ENCODE measurements at regions of chr5 and their contacts with region 1.

Region 1: DNA sequence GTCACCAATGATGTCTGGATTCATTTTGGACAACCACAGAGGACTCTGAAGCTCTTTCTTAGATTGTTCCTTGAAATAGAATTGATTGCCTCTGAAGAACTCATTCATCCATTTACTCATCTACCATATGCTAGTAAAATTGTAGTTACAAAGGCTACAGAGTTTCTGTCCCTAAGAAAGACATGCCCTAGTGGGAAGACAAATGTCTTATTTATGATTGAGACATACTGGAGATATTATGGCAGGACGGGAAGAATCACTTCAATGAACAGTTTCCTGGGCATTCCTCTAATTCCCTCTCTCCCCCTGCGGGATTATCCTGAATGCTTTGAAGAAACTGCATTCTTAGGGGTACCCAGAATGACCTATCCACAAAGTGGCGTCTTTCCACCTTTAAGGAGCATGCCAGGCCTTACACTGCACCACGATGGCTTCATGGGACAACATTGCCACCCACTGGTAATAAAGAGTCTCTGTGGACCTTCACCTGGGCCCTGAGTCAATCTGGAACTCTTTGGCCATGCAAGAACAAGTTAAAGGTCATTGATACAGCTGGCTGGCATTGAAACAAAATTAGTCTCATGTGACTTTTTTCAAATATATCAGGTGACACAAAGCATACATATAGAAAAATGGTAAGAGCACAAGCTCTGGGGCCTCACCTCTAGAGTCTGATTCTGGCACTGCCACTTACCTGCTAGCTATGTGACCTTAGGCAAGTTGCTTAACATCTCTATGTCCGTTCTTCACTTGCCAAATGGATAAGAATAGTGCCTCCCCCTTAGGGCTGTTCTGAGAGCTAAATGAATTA is 32.1 kb downstream of the ANKRD55 start:
- DNase-seq: peak in 1 of 2 donors; percentile 27
- ATAC-seq: peak; percentile 81 to 97 (median 94)
- H3K4me3 ChIP-seq: no peak overlapping the region
- H3K27ac ChIP-seq: no peak overlapping the region
- H3K4me1 ChIP-seq: no peaks in the 10 kb centered on the region
- H3K27me3 ChIP-seq: no peaks in the 10 kb centered on the region
- CTCF ChIP-seq: peak; percentile 67

Region 2: DNA sequence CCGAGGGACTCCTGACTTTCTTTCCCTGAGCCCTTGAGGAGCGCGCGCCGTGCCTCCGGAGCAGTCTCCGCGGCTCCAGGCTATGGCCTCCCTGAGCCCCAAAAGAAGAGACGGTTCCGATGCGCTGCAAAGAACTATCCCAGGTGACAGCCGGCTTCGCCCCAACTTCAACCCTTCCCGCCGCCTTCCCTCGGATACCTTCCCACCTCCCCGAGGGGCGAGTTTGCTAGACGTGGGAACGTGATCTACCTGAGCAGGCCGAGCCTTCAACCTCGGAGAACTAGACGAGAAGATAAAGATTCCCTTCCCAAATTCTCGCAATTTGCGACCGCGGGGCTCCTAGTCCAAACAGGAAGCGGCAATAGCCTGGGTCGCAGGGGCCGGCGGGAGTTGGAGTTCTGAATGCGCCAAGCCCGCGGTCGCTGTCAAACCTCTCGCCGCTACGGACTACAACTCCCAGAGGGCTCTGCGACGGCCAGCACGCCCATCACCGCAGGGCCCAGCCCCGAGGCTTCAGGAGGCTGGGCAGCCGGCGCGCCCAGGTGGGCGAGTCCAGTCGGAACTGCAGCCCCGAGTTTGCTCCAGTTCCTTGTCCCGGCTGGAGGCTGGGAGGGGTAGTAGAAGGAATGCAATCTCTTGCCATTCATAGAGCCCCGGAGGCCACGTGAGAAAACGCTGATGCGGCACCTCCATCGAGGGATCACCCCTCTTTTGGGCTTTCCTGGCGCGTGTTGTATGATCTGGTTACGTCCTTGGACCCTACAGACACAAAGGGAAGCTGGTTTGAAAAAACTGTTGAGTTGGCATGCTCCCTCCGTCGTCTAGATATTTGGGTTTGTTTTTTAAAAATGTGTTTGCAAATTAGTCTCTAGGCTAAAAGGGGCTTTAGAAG is 488.8 kb before region 1 on chr5 and contains the start of gene SLC38A9:
- intact Hi-C with region 1: loop called in 1 of 2 experiments (anchors 10 kb)
- DNase-seq: peak; percentile 97 to 98
- ATAC-seq: peak; percentile 100
- H3K4me3 ChIP-seq: peak within 1 kb of the TSS; percentile 82
- H3K27ac ChIP-seq: peak within 1 kb of the TSS; percentile 72
- H3K4me1 ChIP-seq: peaks cover 6% of the 10 kb centered on the region
- H3K27me3 ChIP-seq: no peaks in the 10 kb centered on the region
- CTCF ChIP-seq: no peak
- total RNA-seq, gene SLC38A9: 4.8 to 7.2 (median 6.8) TPM

Region 3: GRCh38 chr5:55936100-55936693 is 264.9 kb before region 1 on chr5:
- intact Hi-C with region 1: loop called (anchors 2 to 10 kb)
- DNase-seq: peak; percentile 76 to 89
- ATAC-seq: peak; percentile 63 to 77 (median 72)
- H3K4me3 ChIP-seq: no peak overlapping the region
- H3K27ac ChIP-seq: no peak overlapping the region
- H3K4me1 ChIP-seq: no peaks in the 10 kb centered on the region
- H3K27me3 ChIP-seq: no peaks in the 10 kb centered on the region
- CTCF ChIP-seq: peak; percentile 89

Region 4: GRCh38 chr5:55969956-55970355 is 231.1 kb before region 1 on chr5:
- intact Hi-C with region 1: loop called (anchors 10 kb)
- DNase-seq: no peak
- ATAC-seq: no peak
- H3K4me3 ChIP-seq: no peak overlapping the region
- H3K27ac ChIP-seq: no peak overlapping the region
- H3K4me1 ChIP-seq: peaks cover 4% of the 10 kb centered on the region
- H3K27me3 ChIP-seq: no peaks in the 10 kb centered on the region
- CTCF ChIP-seq: no peak

Measured in psoas muscle (tissue), 8 donors.